Mammary epithelial cell (primary cell): ENCODE measurements at regions of chr19 and their contacts with region 1.

Region 1: DNA sequence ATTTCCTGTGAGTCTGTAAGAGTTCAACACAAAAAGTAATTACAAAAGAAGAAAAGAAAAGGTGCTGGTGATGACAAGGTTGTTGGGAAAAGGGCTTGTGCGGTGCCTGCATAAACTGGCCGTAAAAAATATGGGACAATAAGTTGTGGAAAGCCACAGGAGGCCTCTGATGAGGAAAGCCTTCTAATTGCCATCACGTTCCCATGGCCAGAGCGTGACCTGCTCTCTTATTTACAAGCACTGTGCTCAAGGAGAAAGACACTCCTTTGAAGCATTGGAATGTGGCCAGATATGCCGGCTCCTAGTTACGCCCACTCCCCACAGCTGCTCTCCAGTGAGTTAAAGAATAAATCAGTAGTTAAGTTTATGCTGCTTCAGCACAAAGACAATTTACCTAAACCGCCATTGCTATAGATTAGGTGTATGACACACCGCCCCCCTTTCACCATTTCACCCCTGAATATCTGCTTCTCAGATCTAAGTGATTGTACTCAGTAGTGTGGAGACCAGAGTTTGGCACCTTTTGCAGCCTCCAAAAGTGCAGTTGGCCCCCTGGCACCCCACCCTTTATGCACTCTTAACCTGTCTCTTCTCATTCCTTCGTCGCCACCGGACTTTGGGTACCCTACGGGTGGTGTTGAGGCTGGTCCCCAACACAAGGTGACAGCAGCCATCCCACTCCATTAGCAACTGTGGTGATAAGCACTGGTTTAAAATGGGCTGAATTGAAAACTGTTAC is 8.1 kb upstream of the PGLYRP1 start:
- DNase-seq: no peak
- H3K4me3 ChIP-seq: no peak overlapping the region
- H3K27ac ChIP-seq: no peak overlapping the region
- H3K4me1 ChIP-seq: no peaks in the 10 kb centered on the region
- H3K27me3 ChIP-seq: no peaks in the 10 kb centered on the region
- CTCF ChIP-seq: no peak

Region 2: GRCh38 chr19:45848922-45849321 is 182.1 kb before region 1 on chr19:
- CTCF ChIA-PET with region 1: no interaction called
- dilution Hi-C with region 1: no loop called
- in situ Hi-C with region 1: no loop called
- intact Hi-C with region 1: no loop called
- DNase-seq: no peak
- H3K4me3 ChIP-seq: no peak overlapping the region
- H3K27ac ChIP-seq: no peak overlapping the region
- H3K4me1 ChIP-seq: no peaks in the 10 kb centered on the region
- H3K27me3 ChIP-seq: no peaks in the 10 kb centered on the region
- CTCF ChIP-seq: peak; percentile 11 to 27

Region 3: GRCh38 chr19:45994456-45994988 is 36.5 kb before region 1 on chr19:
- CTCF ChIA-PET with region 1: no interaction called
- dilution Hi-C with region 1: no loop called
- in situ Hi-C with region 1: no loop called
- intact Hi-C with region 1: no loop called
- DNase-seq: peak; percentile 28
- H3K4me3 ChIP-seq: peak overlapping the region; percentile 58 to 67 (median 61)
- H3K27ac ChIP-seq: peak overlapping the region; percentile 7
- H3K4me1 ChIP-seq: peaks cover 6% of the 10 kb centered on the region
- H3K27me3 ChIP-seq: no peaks in the 10 kb centered on the region
- CTCF ChIP-seq: no peak

Region 4: GRCh38 chr19:46040952-46041500 is 10.0 kb after region 1 on chr19 and contains the start of gene IGFL4:
- CTCF ChIA-PET with region 1: interaction called, 3 read pairs
- dilution Hi-C with region 1: no loop called
- in situ Hi-C with region 1: no loop called
- intact Hi-C with region 1: loop called (anchors 1 kb)
- DNase-seq: peak; percentile 64
- H3K4me3 ChIP-seq: no peak within 1 kb of the TSS
- H3K27ac ChIP-seq: no peak within 1 kb of the TSS
- H3K4me1 ChIP-seq: peaks cover 10% of the 10 kb centered on the region
- H3K27me3 ChIP-seq: no peaks in the 10 kb centered on the region
- CTCF ChIP-seq: no peak
- total RNA-seq, gene IGFL4: 1.5 TPM in 1 of 2 donors, not detected in the other

Region 5: DNA sequence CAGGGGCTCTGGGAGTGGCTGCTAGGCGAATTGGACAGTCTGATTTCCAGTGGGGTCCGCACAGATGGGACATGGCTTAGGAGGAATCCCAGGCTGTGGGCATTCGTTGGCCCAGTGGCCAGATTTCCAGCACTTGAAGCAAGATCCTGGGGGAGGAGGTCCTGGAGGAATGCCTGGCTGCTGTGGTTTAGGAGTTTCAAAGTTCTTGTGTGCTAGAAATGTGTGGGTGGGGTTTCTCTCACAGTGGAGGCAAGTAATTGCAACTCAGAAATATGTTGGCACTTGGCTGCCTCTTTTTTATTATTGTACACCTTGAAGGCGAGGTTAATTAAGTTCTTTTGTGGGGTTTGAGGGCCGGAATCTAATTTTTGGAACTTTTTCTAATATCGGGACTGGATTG is 76.4 kb after region 1 on chr19:
- CTCF ChIA-PET with region 1: no interaction called
- dilution Hi-C with region 1: no loop called
- in situ Hi-C with region 1: no loop called
- intact Hi-C with region 1: no loop called
- DNase-seq: peak; percentile 78
- H3K4me3 ChIP-seq: no peak overlapping the region
- H3K27ac ChIP-seq: peak overlapping the region; percentile 34
- H3K4me1 ChIP-seq: peaks cover 21% of the 10 kb centered on the region
- H3K27me3 ChIP-seq: no peaks in the 10 kb centered on the region
- CTCF ChIP-seq: no peak

Region 6: GRCh38 chr19:46192992-46193650 is 162.1 kb after region 1 on chr19:
- CTCF ChIA-PET with region 1: interaction called, 3 read pairs
- dilution Hi-C with region 1: no loop called
- in situ Hi-C with region 1: loop called in 1 of 2 experiments (anchors 5 kb)
- intact Hi-C with region 1: loop called (anchors 1 kb)
- DNase-seq: peak; percentile 86
- H3K4me3 ChIP-seq: no peak overlapping the region
- H3K27ac ChIP-seq: peak overlapping the region; percentile 51
- H3K4me1 ChIP-seq: peaks cover 43% of the 10 kb centered on the region
- H3K27me3 ChIP-seq: no peaks in the 10 kb centered on the region
- CTCF ChIP-seq: no peak

Region 7: GRCh38 chr19:46265217-46265828 is 234.3 kb after region 1 on chr19:
- CTCF ChIA-PET with region 1: interaction called, 4 read pairs
- dilution Hi-C with region 1: no loop called
- in situ Hi-C with region 1: loop called (anchors 5 kb)
- intact Hi-C with region 1: loop called (anchors 1 kb)
- DNase-seq: peak; percentile 70
- H3K4me3 ChIP-seq: no peak overlapping the region
- H3K27ac ChIP-seq: no peak overlapping the region
- H3K4me1 ChIP-seq: peaks cover 10% of the 10 kb centered on the region
- H3K27me3 ChIP-seq: peaks cover 4% of the 10 kb centered on the region
- CTCF ChIP-seq: peak; percentile 80 to 84

Region 8: GRCh38 chr19:47081111-47081510 is 1050.1 kb after region 1 on chr19:
- CTCF ChIA-PET with region 1: no interaction called
- dilution Hi-C with region 1: no loop called
- in situ Hi-C with region 1: no loop called
- intact Hi-C with region 1: no loop called
- DNase-seq: no peak
- H3K4me3 ChIP-seq: no peak overlapping the region
- H3K27ac ChIP-seq: no peak overlapping the region
- H3K4me1 ChIP-seq: peaks cover 2% of the 10 kb centered on the region
- H3K27me3 ChIP-seq: no peaks in the 10 kb centered on the region
- CTCF ChIP-seq: no peak